ENCODE measurements at regions of chr19 and their contacts with region 1.

Region 1: GRCh38 chr19:58097781-58098681 is at the start of gene ZSCAN18:
- DNase-seq: peak; percentile 90 to 99
- H3K4me3 ChIP-seq: peak within 1 kb of the TSS; percentile 97 to 99
- H3K27ac ChIP-seq: peak within 1 kb of the TSS; percentile 97 to 98
- H3K4me1 ChIP-seq: peaks cover 0 to 9% of the 10 kb centered on the region in 2 donors
- H3K27me3 ChIP-seq: no peaks in the 10 kb centered on the region
- CTCF ChIP-seq: no peak
- total RNA-seq, gene ZSCAN18: 181 TPM

Region 2: GRCh38 chr19:56393119-56394012 is 1704.7 kb before region 1 on chr19 and contains the start of gene ZNF582:
- intact Hi-C with region 1: loop called (anchors 10 kb)
- DNase-seq: peak; percentile 89 to 98
- H3K4me3 ChIP-seq: peak within 1 kb of the TSS; percentile 67 to 85
- H3K27ac ChIP-seq: peak within 1 kb of the TSS; percentile 91 to 93
- H3K4me1 ChIP-seq: peaks cover 0 to 3% of the 10 kb centered on the region in 2 donors
- H3K27me3 ChIP-seq: no peaks in the 10 kb centered on the region
- CTCF ChIP-seq: peak; percentile 49 to 80 (median 69)
- total RNA-seq, gene ZNF582: 0.43 TPM

Region 3: DNA sequence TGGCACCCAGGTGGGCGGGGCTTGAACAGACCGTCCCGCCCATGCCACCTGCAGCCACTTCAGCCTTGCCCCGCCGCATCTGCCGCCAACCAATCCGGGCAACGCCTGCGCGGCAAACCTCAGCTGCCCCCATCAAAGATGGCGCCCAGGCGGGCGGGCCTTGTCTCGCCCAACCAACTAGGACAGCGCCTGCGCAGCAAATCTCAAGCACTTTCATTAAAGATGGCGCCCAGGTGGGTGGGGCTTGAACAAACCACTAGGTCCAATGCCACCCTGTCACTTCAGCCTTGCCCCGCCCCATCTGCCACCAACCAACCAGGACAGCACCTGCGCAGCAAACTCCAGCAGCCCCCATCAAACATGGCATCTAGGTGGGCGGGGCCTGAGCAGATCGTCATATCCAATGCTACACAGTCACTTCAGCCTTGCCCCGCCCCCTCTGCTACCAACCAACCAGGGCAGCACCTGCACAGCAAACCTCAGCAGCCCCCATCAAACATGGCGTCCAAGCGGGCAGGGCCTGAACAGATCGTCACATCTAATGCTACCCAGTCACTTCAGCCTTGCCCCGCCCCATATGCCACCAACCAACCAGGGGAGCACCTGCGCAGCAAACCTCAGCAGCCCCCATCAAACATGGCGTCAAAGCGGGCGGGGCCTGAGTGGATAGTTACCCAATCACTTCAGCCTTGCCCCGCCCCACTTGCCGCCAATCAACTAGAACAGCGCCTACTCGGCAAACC is 1259.0 kb before region 1 on chr19:
- intact Hi-C with region 1: loop called (anchors 2 kb)
- DNase-seq: peak; percentile 94 to 98
- H3K4me3 ChIP-seq: peak overlapping the region; percentile 57 to 70
- H3K27ac ChIP-seq: peak overlapping the region; percentile 86 to 95
- H3K4me1 ChIP-seq: no peaks in the 10 kb centered on the region
- H3K27me3 ChIP-seq: no peaks in the 10 kb centered on the region
- CTCF ChIP-seq: no peak

Region 4: GRCh38 chr19:58002384-58003173 is 95.5 kb before region 1 on chr19 and contains the start of gene ZNF606:
- intact Hi-C with region 1: loop called (anchors 2 kb)
- DNase-seq: peak; percentile 25 to 90
- H3K4me3 ChIP-seq: peak within 1 kb of the TSS; percentile 78 to 98
- H3K27ac ChIP-seq: peak within 1 kb of the TSS; percentile 89 to 93
- H3K4me1 ChIP-seq: peaks cover 4 to 11% of the 10 kb centered on the region in 2 donors
- H3K27me3 ChIP-seq: no peaks in the 10 kb centered on the region
- CTCF ChIP-seq: no peak
- total RNA-seq, gene ZNF606: 1.5 TPM

Region 5: GRCh38 chr19:58059003-58059670 is 38.9 kb before region 1 on chr19 and contains the start of gene ZNF135:
- intact Hi-C with region 1: loop called (anchors 1 kb)
- DNase-seq: peak; percentile 23 to 90
- H3K4me3 ChIP-seq: peak within 1 kb of the TSS; percentile 78 to 81
- H3K27ac ChIP-seq: peak within 1 kb of the TSS; percentile 91 to 93
- H3K4me1 ChIP-seq: peaks cover 0 to 4% of the 10 kb centered on the region in 2 donors
- H3K27me3 ChIP-seq: no peaks in the 10 kb centered on the region
- CTCF ChIP-seq: no peak
- total RNA-seq, gene ZNF135: 3.7 TPM

Region 6: DNA sequence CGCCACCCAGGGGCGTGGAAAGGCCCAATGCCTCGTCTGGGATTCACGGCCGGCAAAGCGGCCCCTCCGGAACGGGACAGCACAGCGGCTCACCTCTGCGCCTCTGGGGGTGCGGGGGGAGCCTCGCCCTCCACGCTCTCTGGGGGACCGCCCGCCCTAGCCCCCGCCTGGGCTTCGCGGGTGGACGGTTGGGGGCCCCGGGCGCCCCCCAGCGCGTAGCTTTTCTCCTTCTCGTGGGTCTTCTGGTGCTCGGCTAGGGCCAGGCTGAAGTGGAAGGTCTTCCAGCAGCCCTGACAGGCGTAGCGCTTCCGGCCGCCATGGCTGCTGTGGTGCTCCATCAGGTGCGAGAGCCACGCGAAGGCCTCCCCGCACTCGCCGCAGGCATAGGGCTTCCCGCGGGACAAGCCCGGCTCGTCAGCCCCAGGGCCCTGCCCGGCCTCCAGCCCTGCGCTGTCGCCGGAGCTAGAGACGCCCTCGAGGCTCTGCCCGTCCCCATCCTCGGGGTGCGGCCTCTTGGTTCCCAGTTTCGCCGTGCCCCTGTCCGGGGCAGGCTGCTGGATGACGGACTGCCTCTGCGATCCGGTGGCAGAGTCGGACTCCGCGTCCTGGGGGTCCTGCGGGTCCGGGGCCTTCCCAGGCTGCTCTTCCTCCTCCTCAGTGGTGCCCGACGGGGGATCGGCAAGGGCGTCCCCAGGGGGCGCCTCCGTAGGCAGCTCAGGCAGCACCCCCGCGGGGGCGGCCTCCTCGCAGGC is 13.3 kb before region 1 on chr19:
- intact Hi-C with region 1: no loop called
- DNase-seq: no peak
- H3K4me3 ChIP-seq: no peak overlapping the region
- H3K27ac ChIP-seq: no peak overlapping the region
- H3K4me1 ChIP-seq: no peaks in the 10 kb centered on the region
- H3K27me3 ChIP-seq: no peaks in the 10 kb centered on the region
- CTCF ChIP-seq: no peak

Measured in ascending aorta (tissue), 2 donors.